ENCODE measurements at regions of chr5 and their contacts with region 1.

Region 1: DNA sequence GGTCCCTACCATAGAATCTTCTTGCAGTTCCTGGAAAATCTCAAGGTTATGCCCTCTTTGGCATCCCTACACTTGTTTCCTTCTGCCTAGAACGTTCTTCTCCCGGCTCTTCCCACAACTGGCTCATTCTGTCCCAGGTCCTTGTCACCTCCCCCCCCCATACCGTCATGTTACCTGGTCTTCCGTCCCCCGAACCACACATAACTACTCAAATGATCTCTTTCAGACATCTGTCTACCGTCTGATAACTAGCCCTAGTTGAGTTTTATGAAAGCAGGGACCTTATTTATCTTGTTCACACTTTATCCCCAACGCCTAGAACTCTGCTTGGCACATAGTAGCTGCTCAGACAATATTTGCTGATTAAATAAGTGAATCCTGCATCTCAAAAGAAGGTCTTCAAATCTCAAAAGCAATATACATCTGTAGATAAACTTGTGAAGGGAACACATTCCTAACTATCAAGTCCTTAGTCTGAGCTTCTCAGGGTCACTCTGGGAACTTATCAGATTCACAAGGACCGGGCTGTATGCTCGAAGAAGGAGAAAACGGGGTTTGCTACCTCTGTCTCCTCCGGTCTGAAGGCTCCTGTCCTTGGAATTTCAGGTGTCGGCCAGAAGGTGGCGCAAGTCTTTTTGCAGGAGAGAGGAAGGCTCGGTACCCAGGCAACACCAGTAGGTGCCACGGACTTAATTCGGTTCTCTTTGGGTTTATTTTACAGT is 30.0 kb downstream of the LCP2 start:
- DNase-seq: no peak
- H3K4me3 ChIP-seq: no peak overlapping the region
- H3K27me3 ChIP-seq: peaks cover 5% of the 10 kb centered on the region
- CTCF ChIP-seq: peak; percentile 86

Region 2: DNA sequence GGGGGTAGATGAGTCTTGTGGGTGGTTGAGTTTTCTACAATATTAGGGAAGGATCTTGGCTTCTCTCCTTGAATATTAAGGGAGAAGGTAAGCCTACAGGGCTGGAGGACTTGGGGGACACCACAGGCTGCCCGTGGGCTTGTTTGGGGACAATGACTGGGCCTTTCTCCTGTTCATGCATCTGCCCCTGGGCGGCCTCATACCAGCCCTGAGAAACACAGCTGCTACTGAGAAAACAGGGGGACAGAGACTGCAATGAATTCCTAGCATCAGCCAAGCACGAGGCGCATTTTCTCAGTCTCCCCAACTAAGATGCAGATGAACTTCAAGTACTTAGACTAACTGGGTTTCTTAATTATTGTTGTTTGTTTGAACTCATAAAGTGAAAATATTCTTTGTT is 10.2 kb before region 1 on chr5:
- CTCF ChIA-PET with region 1: interaction called, 17 read pairs
- POLR2A ChIA-PET with region 1: no interaction called
- DNase-seq: no peak
- H3K4me3 ChIP-seq: no peak overlapping the region
- H3K27me3 ChIP-seq: peaks cover 2% of the 10 kb centered on the region; the same call in 1 of the 2 replicates
- CTCF ChIP-seq: no peak

Region 3: DNA sequence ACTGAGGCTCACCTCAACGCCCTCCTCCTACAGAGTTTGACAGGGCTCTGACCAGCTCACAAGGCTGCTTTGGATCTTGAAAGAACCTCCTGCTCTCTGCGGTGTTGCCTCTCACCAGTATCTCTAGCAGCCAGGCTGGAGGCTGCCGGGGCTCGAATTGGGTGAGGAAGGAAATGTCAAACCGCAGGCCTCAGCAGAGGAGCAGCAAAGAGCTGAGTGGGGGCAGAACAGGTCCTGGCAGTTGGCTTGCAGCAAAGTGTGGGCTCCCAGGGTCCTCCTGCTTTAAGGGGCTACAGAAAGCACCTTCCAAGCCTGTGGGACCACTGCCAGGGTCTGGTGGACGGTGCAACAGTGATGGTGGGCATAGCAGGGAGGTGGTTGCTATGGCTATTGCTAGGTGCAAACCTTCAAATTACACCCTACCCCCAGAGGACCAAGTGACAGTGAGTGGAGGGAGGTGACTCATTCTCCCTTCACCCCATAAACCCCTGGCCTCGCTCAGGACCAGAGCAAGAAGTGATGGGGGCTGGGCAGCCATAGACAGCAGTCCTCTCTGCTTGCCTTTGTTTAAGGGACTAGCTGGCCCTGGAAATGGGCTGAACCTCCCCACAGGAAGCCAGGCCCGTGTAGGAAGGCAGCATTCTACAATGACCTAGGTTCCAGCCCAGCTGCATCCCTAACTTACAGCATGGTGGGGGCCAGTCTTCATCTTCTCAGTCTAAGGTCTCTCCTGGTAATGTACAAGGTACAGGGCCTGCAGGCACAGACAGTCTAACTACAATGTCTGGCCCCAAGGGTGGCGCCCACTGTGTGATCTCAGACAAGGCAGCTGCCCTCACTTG is 11.2 kb after region 1 on chr5:
- CTCF ChIA-PET with region 1: interaction called, 10 read pairs
- POLR2A ChIA-PET with region 1: no interaction called
- DNase-seq: no peak
- H3K4me3 ChIP-seq: no peak overlapping the region
- H3K27me3 ChIP-seq: no peaks in the 10 kb centered on the region; the same call in 1 of the 2 replicates
- CTCF ChIP-seq: no peak

Region 4: GRCh38 chr5:170363671-170364070 is 96.1 kb after region 1 on chr5:
- CTCF ChIA-PET with region 1: no interaction called
- POLR2A ChIA-PET with region 1: no interaction called
- DNase-seq: no peak
- H3K4me3 ChIP-seq: no peak overlapping the region
- H3K27me3 ChIP-seq: no peaks in the 10 kb centered on the region
- CTCF ChIP-seq: no peak

Region 5: GRCh38 chr5:170420780-170421412 is 153.3 kb after region 1 on chr5:
- CTCF ChIA-PET with region 1: interaction called, 32 read pairs
- POLR2A ChIA-PET with region 1: no interaction called
- DNase-seq: no peak
- H3K4me3 ChIP-seq: no peak overlapping the region
- H3K27me3 ChIP-seq: 0 out of 2 replicates have a peak, but pooled peaks cover 3% of the 10 kb centered on the region
- CTCF ChIP-seq: peak; percentile 72